ENCODE measurements at regions of chr1 and their contacts with region 1.

Region 1: GRCh38 chr1:1441002-1441888 is 5.8 kb downstream of the VWA1 start:
- DNase-seq: no peak
- H3K4me3 ChIP-seq: no peak overlapping the region
- H3K27ac ChIP-seq: peak overlapping the region; percentile 43 to 74 (median 60)
- H3K4me1 ChIP-seq: peaks cover 26 to 64% (median 56%) of the 10 kb centered on the region in 4 donors
- H3K27me3 ChIP-seq: no peaks in the 10 kb centered on the region
- CTCF ChIP-seq: peak; percentile 89 to 97 (median 94)
- EP300 ChIP-seq: no peak
- POLR2A ChIP-seq: no peak

Region 2: DNA sequence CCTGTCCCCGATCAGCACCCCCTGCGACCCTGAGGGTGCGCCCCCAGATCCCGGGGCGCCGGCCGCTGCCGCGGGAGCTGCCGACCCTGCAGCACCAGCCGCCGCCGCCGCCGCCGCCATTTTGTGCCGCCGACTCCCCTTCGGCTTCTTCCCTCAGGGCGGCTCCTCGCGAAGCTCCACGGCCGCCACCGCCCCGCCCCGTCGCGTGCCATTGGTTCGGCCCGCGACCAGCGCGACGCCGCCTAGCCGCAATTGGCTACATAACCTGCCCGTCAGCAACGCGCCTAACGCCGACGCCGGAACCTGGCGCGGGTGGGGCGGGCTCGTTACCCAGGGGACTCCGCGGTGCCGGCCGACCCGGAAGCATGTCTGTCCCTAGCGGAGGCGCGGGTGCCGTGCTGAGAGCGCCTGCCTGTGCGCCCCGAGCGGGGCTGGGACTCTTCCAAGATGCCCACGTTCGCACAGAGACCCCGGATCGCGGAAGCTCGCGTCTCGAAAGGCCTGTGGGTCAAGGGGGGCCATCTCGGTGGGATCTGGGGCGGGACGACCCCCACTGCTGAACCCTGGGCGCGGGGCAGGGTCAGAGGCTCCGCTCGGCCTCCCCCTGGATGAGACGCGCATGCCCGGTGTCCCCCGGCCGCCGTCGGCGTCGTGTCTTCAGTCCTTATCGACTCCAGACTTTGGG is 41.9 kb before region 1 on chr1 and contains the start of gene CCNL2:
- intact Hi-C with region 1: loop called (anchors 2 kb)
- DNase-seq: peak; percentile 99
- H3K4me3 ChIP-seq: peak within 1 kb of the TSS; percentile 87 to 100 (median 97)
- H3K27ac ChIP-seq: peak within 1 kb of the TSS; percentile 88 to 92 (median 88)
- H3K4me1 ChIP-seq: peaks cover 43 to 62% (median 47%) of the 10 kb centered on the region in 4 donors
- H3K27me3 ChIP-seq: no peaks in the 10 kb centered on the region
- CTCF ChIP-seq: peak; percentile 61 to 80 (median 68)
- EP300 ChIP-seq: no peak
- POLR2A ChIP-seq: peak; percentile 60
- total RNA-seq, gene CCNL2: 73.4 to 136 (median 108) TPM

Region 3: GRCh38 chr1:1419642-1420384 is 21.4 kb before region 1 on chr1:
- intact Hi-C with region 1: no loop called
- DNase-seq: no peak
- H3K4me3 ChIP-seq: peak overlapping the region; percentile 53 to 62 (median 54)
- H3K27ac ChIP-seq: peak overlapping the region; percentile 75 to 84 (median 76)
- H3K4me1 ChIP-seq: peaks cover 8 to 52% (median 34%) of the 10 kb centered on the region in 4 donors
- H3K27me3 ChIP-seq: no peaks in the 10 kb centered on the region
- CTCF ChIP-seq: peak in 2 of 3 experiments; percentile 29 to 30
- EP300 ChIP-seq: no peak
- POLR2A ChIP-seq: no peak

Region 4: GRCh38 chr1:1510912-1511532 is 69.8 kb after region 1 on chr1:
- intact Hi-C with region 1: no loop called
- DNase-seq: no peak
- H3K4me3 ChIP-seq: peak overlapping the region; percentile 73 to 88 (median 80)
- H3K27ac ChIP-seq: peak overlapping the region; percentile 93 to 96 (median 94)
- H3K4me1 ChIP-seq: peaks cover 9 to 26% (median 20%) of the 10 kb centered on the region in 4 donors
- H3K27me3 ChIP-seq: no peaks in the 10 kb centered on the region
- CTCF ChIP-seq: no peak
- EP300 ChIP-seq: no peak
- POLR2A ChIP-seq: no peak

Region 5: GRCh38 chr1:1730870-1731269 is 289.6 kb after region 1 on chr1:
- intact Hi-C with region 1: no loop called
- DNase-seq: no peak
- H3K4me3 ChIP-seq: no peak overlapping the region
- H3K27ac ChIP-seq: no peak overlapping the region
- H3K4me1 ChIP-seq: peaks cover 0 to 12% (median 0%) of the 10 kb centered on the region in 4 donors
- H3K27me3 ChIP-seq: no peaks in the 10 kb centered on the region
- CTCF ChIP-seq: no peak
- EP300 ChIP-seq: no peak
- POLR2A ChIP-seq: no peak